ENCODE measurements at regions of chr3 and their contacts with region 1.

Region 1: DNA sequence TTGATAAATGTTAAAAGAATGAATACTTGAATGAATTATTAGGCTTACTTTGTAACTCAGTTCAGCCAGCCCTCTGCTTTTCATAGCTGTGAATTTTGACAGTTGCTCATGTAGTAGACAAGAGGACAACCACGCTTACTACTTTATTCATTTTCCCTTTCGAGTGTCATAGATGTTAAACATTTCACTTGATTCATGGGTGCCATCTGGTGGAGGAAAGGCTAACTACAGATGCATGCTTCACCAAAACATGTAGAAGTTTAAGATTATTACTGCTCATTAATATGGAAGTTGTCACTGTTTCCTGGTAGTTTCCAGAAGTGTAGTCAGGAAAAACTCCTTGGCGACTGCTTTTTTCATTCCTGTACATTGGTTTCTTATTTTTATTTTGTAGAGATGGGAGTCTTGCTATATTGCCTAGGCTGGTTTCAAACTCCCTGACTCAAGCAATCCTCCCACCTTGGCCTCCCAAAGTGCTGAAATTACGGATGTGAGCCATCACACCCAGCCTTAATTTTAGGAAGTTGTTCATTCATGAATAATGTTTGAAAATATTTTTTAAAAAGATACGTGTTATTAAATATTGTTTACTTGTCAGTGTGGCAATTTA is 163.2 kb downstream of the B3GALNT1 start:
- DNase-seq: peak in 34 of 35 experiments; percentile 15 to 80 (median 52)
- ATAC-seq: peak in 3 of 4 experiments; percentile 47 to 65 (median 63)
- H3K4me3 ChIP-seq: no peak overlapping the region
- H3K4me3 Mint-ChIP-seq: no peak overlapping the region
- H3K27ac ChIP-seq: no peak overlapping the region
- H3K27ac Mint-ChIP-seq: no peak overlapping the region
- H3K4me1 ChIP-seq: no peaks in the 10 kb centered on the region
- H3K4me1 Mint-ChIP-seq: peaks cover 0 to 4% (median 3%) of the 10 kb centered on the region in 3 donors
- H3K27me3 ChIP-seq: no peaks in the 10 kb centered on the region
- H3K27me3 Mint-ChIP-seq: no peaks in the 10 kb centered on the region

Region 2: GRCh38 chr3:160686955-160687535 is 254.9 kb before region 1 on chr3:
- CTCF ChIA-PET with region 1: interaction called, 10 to 11 read pairs
- POLR2A ChIA-PET with region 1: no interaction called
- DNase-seq: peak in 1 of 35 experiments; percentile 33
- ATAC-seq: no peak
- H3K4me3 ChIP-seq: no peak overlapping the region
- H3K4me3 Mint-ChIP-seq: no peak overlapping the region
- H3K27ac ChIP-seq: no peak overlapping the region
- H3K27ac Mint-ChIP-seq: no peak overlapping the region
- H3K4me1 ChIP-seq: no peaks in the 10 kb centered on the region
- H3K4me1 Mint-ChIP-seq: no peaks in the 10 kb centered on the region
- H3K27me3 ChIP-seq: peaks cover 0 to 3% of the 10 kb centered on the region in 2 experiments
- H3K27me3 Mint-ChIP-seq: peaks cover 4 to 6% of the 10 kb centered on the region in 2 donors

Region 3: GRCh38 chr3:160707187-160707794 is 234.7 kb before region 1 on chr3:
- CTCF ChIA-PET with region 1: interaction called, 16 to 28 read pairs
- POLR2A ChIA-PET with region 1: no interaction called
- DNase-seq: peak in 24 of 35 experiments; percentile 3 to 75 (median 18)
- ATAC-seq: peak; percentile 53 to 62 (median 58)
- H3K4me3 ChIP-seq: no peak overlapping the region
- H3K4me3 Mint-ChIP-seq: no peak overlapping the region
- H3K27ac ChIP-seq: no peak overlapping the region
- H3K27ac Mint-ChIP-seq: no peak overlapping the region
- H3K4me1 ChIP-seq: no peaks in the 10 kb centered on the region
- H3K4me1 Mint-ChIP-seq: no peaks in the 10 kb centered on the region
- H3K27me3 ChIP-seq: peaks cover 0 to 9% of the 10 kb centered on the region in 2 experiments
- H3K27me3 Mint-ChIP-seq: peaks cover 18 to 40% of the 10 kb centered on the region in 2 donors

Region 4: DNA sequence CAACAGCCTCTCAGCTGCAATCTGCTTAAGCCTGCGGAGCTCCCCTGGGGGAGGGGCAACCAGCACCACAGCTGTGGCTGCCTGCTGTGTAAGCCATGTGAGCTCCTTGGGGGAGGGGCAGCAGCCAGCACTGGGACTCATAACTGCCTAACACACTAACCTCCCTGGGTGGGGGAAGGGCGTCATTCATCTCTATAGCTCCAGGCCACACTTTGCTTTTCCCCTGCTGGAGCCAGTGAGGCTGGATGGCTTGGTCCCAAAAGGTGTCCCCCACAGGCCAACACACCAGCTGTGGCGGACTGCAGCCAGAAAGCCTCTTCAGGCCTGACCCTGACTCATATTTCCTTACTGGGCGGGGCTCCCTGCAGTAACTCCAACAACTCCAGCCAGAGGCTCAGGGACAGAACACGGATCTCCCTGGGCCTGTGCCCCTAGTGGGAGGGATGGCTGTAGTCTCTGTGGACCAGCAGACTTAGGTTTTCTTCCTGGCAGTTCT is 56.2 kb before region 1 on chr3:
- CTCF ChIA-PET with region 1: no interaction called
- POLR2A ChIA-PET with region 1: no interaction called
- DNase-seq: no peak
- ATAC-seq: no peak
- H3K4me3 ChIP-seq: no peak overlapping the region
- H3K4me3 Mint-ChIP-seq: no peak overlapping the region
- H3K27ac ChIP-seq: no peak overlapping the region
- H3K27ac Mint-ChIP-seq: no peak overlapping the region
- H3K4me1 ChIP-seq: no peaks in the 10 kb centered on the region
- H3K4me1 Mint-ChIP-seq: no peaks in the 10 kb centered on the region
- H3K27me3 ChIP-seq: peaks cover 0 to 8% of the 10 kb centered on the region in 2 experiments
- H3K27me3 Mint-ChIP-seq: no peaks in the 10 kb centered on the region

Region 5: GRCh38 chr3:160929595-160929994 is 12.4 kb before region 1 on chr3:
- CTCF ChIA-PET with region 1: interaction called, 4 to 11 read pairs
- POLR2A ChIA-PET with region 1: interaction called in 1 of 2 experiments, 4 read pairs
- DNase-seq: no peak
- ATAC-seq: no peak
- H3K4me3 ChIP-seq: no peak overlapping the region
- H3K4me3 Mint-ChIP-seq: no peak overlapping the region
- H3K27ac ChIP-seq: no peak overlapping the region
- H3K27ac Mint-ChIP-seq: no peak overlapping the region
- H3K4me1 ChIP-seq: no peaks in the 10 kb centered on the region
- H3K4me1 Mint-ChIP-seq: no peaks in the 10 kb centered on the region
- H3K27me3 ChIP-seq: no peaks in the 10 kb centered on the region
- H3K27me3 Mint-ChIP-seq: peaks cover 0 to 3% of the 10 kb centered on the region in 2 donors